GM12878 (cell line): ENCODE measurements at regions of chr9 and their contacts with region 1.

Region 1: DNA sequence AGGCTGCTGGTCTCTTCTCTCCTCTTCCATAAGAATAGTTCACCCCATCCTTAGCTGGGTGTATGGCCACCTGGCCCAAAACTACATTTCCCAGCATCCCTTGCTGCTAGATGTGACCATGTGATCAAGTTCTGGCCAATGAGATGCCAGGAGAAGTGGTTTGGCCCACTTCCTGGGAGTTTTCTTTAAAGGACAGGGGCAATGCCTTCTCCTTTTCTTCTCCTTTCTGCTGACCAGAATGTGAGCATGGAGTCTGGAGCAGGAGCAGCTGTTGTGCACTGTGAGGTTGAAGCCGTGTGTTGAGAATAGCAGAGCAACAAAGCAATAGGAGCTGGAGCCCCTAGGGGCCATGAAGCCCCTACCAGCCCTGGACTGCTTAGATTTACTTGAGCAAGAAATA is 36.8 kb downstream of the C9orf50 start:
- DNase-seq: peak; percentile 76
- ATAC-seq: peak; percentile 83
- H3K4me3 ChIP-seq: no peak overlapping the region; the same call in 1 of the 2 replicates
- H3K27ac ChIP-seq: peak overlapping the region; percentile 52; the same call in 1 of the 2 replicates
- H3K4me1 ChIP-seq: peaks cover 58% of the 10 kb centered on the region
- H3K27me3 ChIP-seq: no peaks in the 10 kb centered on the region
- CTCF ChIP-seq: no peak
- EP300 ChIP-seq: no peak
- POLR2A ChIP-seq: no peak
- RAD21 ChIP-seq: no peak

Region 2: DNA sequence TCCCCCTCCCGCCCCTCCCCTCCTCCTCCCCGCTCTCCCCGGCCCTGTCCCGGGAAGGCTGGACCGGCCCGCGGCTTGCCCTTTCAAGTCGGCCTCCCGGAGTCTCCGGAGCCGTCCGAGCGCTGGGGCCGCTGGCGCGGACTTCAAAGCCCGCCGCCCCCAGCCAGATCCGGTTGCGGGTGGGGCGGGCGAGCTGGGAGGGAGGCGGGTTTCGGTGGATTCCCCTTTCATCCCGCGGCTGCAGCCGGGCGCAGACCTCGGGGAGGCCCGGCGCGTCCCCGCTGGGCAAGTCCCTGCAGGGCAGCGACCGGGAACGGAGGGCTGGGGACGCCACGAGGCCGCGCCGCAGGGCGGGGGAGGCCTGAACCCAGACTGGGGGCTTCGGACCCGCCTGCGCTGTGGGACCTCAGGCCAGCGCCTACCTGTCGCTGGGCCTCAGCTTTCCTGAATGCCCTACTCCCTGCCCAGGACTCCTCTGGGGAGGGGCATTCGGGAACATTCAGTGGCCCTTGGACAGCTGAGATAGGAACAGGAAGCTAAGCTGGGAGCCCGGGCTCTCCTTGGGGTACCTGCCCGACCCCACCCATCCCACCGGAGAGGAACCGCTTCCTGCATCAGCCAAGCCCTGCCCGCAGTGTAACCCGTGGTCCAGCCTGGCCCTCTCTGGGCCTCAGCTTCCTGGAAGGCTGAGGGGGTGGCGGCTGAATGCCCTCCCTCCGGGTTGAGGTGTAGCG is 13.4 kb after region 1 on chr9:
- CTCF ChIA-PET with region 1: interaction called, 11 read pairs
- POLR2A ChIA-PET with region 1: interaction called, 70 read pairs
- RAD21 ChIA-PET with region 1: interaction called, 61 read pairs
- SMC1A ChIA-PET with region 1: interaction called, 75 read pairs
- in situ Hi-C with region 1: no loop called
- intact Hi-C with region 1: no loop called
- DNase-seq: no peak
- ATAC-seq: peak; percentile 80
- H3K4me3 ChIP-seq: peak overlapping the region; percentile 44; the same call in 1 of the 2 replicates
- H3K27ac ChIP-seq: peak overlapping the region; percentile 27; the same call in 1 of the 2 replicates
- H3K4me1 ChIP-seq: peaks cover 24% of the 10 kb centered on the region
- H3K27me3 ChIP-seq: no peaks in the 10 kb centered on the region
- CTCF ChIP-seq: no peak; a peak in 1 of 6 replicates
- EP300 ChIP-seq: no peak
- POLR2A ChIP-seq: no peak
- RAD21 ChIP-seq: no peak

Region 3: DNA sequence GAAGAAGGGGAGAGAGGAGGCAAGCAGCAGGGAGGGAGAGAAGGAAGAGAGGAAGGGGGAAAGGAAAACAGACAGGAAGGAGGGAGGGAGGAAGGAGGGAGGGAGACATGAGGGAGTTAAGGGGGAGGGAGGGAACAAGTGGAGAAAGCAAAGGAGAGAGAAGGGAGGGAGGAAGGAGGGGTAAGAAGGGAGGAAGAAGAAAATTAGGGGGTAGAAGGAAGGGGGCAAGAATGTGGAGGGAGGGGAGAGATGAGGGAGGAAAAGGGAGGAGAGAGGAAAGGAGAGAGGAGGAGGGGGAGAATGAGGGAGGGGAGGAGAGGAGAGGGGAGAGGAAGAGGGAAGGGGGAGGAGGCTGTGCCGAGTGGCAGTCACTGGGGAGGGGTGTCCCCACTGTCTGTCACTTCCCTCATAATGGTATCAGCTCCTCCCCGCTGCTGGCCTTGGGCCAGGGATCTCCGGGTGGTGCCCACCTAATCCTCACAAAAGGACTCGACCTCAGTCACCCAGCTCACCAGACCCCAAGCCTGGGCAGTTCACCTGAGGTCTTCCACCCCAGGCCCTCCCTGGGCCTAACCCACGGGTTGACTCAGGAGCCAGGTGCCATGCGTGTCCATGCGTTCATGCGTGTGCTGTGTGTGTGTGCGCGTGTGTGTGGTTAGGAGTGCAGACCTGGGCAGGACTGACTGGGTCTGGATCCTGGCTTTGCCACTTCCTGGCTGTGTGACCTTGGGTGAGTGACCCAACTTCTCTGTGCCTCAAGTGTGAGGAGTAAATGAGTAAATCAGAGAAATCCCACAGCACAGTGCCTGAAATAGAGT is 18.7 kb after region 1 on chr9:
- CTCF ChIA-PET with region 1: interaction called, 11 read pairs
- POLR2A ChIA-PET with region 1: interaction called, 70 read pairs
- RAD21 ChIA-PET with region 1: interaction called, 61 read pairs
- SMC1A ChIA-PET with region 1: interaction called, 75 read pairs
- in situ Hi-C with region 1: no loop called
- intact Hi-C with region 1: no loop called
- DNase-seq: no peak
- ATAC-seq: peak; percentile 77
- H3K4me3 ChIP-seq: no peak overlapping the region
- H3K27ac ChIP-seq: no peak overlapping the region
- H3K4me1 ChIP-seq: peaks cover 12% of the 10 kb centered on the region
- H3K27me3 ChIP-seq: no peaks in the 10 kb centered on the region
- CTCF ChIP-seq: no peak
- EP300 ChIP-seq: 0 out of 4 replicates have a peak, but pooled peaks of 1 of the 2 experiments have one; percentile 19
- POLR2A ChIP-seq: no peak
- RAD21 ChIP-seq: no peak